Left ventricle myocardium superior (tissue), 1 donor: ENCODE measurements at regions of chr22 and their contacts with region 1.

Region 1: GRCh38 chr22:16922076-16922475 is 85.9 kb downstream of the GAB4 start:
- DNase-seq: no peak
- ATAC-seq: no peak

Region 2: GRCh38 chr22:17057959-17058814 is 136.1 kb after region 1 on chr22:
- intact Hi-C with region 1: loop called (anchors 10 kb)
- DNase-seq: no peak
- ATAC-seq: peak; percentile 90